IMR-90 (cell line): ENCODE measurements at regions of chr11 and their contacts with region 1.

Region 1: DNA sequence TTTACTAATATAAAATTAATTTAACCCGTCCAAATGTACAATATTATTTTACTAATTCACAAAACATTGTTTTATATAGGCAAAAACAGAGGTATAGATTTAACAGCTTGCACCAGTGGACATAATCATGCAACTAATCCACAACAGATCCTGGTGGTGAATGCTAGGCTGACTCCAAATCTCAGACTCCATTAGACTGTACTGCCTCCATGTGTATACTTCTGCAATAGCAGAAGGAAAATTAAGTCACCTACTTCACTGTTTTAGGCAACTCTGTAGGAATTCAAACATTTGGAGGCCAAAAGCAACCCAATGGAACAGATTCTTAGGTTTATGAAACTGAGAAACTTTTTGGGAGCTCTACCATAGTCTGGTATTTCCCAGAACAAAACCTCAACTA is 30.0 kb upstream of the RAB39A start:
- DNase-seq: peak; percentile 63
- ATAC-seq: peak; percentile 91
- H3K4me3 ChIP-seq: no peak overlapping the region
- H3K27ac ChIP-seq: no peak overlapping the region
- H3K4me1 ChIP-seq: no peaks in the 10 kb centered on the region
- H3K27me3 ChIP-seq: 0 out of 2 replicates have a peak, but pooled peaks cover 2% of the 10 kb centered on the region
- CTCF ChIP-seq: peak; percentile 71
- POLR2A ChIP-seq: no peak
- RAD21 ChIP-seq: peak; percentile 74

Region 2: GRCh38 chr11:107573438-107573837 is 324.8 kb before region 1 on chr11:
- CTCF ChIA-PET with region 1: no interaction called
- POLR2A ChIA-PET with region 1: no interaction called
- dilution Hi-C with region 1: no loop called
- in situ Hi-C with region 1: no loop called
- intact Hi-C with region 1: loop called (anchors 1 kb)
- DNase-seq: no peak
- ATAC-seq: no peak
- H3K4me3 ChIP-seq: no peak overlapping the region
- H3K27ac ChIP-seq: no peak overlapping the region
- H3K4me1 ChIP-seq: no peaks in the 10 kb centered on the region
- H3K27me3 ChIP-seq: peaks cover 4% of the 10 kb centered on the region
- CTCF ChIP-seq: no peak
- POLR2A ChIP-seq: no peak
- RAD21 ChIP-seq: no peak

Region 3: GRCh38 chr11:107719557-107720302 is 178.5 kb before region 1 on chr11:
- CTCF ChIA-PET with region 1: no interaction called
- POLR2A ChIA-PET with region 1: no interaction called
- dilution Hi-C with region 1: no loop called
- in situ Hi-C with region 1: no loop called
- intact Hi-C with region 1: no loop called
- DNase-seq: no peak
- ATAC-seq: peak; percentile 27; the same call in 1 of the 2 replicates
- H3K4me3 ChIP-seq: no peak overlapping the region
- H3K27ac ChIP-seq: no peak overlapping the region
- H3K4me1 ChIP-seq: no peaks in the 10 kb centered on the region
- H3K27me3 ChIP-seq: peaks cover 12% of the 10 kb centered on the region; the same call in 1 of the 2 replicates
- CTCF ChIP-seq: no peak
- POLR2A ChIP-seq: no peak
- RAD21 ChIP-seq: no peak

Region 4: DNA sequence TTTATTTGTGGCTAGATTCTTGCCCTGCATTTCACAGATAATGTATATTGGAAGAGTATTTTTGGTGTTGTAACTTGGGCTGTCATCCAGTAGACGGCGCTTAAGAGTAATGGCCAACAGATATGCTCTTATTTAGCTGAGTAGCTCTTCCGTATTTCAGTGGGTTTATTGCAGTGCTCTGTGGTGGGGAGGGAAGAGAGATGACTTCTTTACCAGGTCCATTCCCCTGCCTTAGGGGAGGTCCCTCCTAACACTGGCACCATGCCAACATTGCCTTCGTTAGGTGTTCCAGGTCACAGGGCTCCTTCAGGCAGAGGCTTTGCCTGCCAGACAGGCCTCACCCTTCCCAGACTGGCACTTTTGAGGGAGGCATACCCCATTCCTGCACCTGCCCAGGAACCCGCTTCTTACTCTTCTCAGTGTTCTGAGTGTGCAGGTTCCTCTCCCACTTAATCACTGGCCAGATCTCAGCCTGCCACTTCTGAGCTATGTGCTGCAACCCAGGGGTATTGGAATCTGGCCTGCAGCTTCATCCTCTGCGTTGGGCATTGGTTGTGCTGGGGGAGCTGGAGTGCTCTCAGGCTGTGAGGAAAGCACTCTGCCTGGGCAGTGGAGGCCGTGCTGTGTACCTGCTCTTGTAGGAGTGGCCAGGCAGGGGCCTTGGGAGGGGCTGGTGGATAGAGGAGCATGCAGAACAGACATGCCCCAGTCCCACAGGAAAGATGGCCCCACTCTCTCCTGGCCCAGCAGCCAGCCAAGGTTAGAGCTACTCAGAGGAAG is 157.0 kb before region 1 on chr11:
- CTCF ChIA-PET with region 1: no interaction called
- POLR2A ChIA-PET with region 1: no interaction called
- dilution Hi-C with region 1: no loop called
- in situ Hi-C with region 1: no loop called
- intact Hi-C with region 1: loop called (anchors 1 kb)
- DNase-seq: peak; percentile 44
- ATAC-seq: peak; percentile 64
- H3K4me3 ChIP-seq: no peak overlapping the region
- H3K27ac ChIP-seq: no peak overlapping the region
- H3K4me1 ChIP-seq: no peaks in the 10 kb centered on the region
- H3K27me3 ChIP-seq: peaks cover 5% of the 10 kb centered on the region
- CTCF ChIP-seq: peak; percentile 59
- POLR2A ChIP-seq: no peak
- RAD21 ChIP-seq: peak; percentile 54

Region 5: GRCh38 chr11:107780775-107781174 is 117.5 kb before region 1 on chr11:
- CTCF ChIA-PET with region 1: no interaction called
- POLR2A ChIA-PET with region 1: no interaction called
- dilution Hi-C with region 1: no loop called
- in situ Hi-C with region 1: no loop called
- intact Hi-C with region 1: no loop called
- DNase-seq: no peak
- ATAC-seq: no peak
- H3K4me3 ChIP-seq: no peak overlapping the region
- H3K27ac ChIP-seq: no peak overlapping the region
- H3K4me1 ChIP-seq: no peaks in the 10 kb centered on the region
- H3K27me3 ChIP-seq: peaks cover 2% of the 10 kb centered on the region; the same call in 1 of the 2 replicates
- CTCF ChIP-seq: 0 out of 2 replicates have a peak, but pooled peaks have one; percentile 4
- POLR2A ChIP-seq: no peak
- RAD21 ChIP-seq: no peak

Region 6: DNA sequence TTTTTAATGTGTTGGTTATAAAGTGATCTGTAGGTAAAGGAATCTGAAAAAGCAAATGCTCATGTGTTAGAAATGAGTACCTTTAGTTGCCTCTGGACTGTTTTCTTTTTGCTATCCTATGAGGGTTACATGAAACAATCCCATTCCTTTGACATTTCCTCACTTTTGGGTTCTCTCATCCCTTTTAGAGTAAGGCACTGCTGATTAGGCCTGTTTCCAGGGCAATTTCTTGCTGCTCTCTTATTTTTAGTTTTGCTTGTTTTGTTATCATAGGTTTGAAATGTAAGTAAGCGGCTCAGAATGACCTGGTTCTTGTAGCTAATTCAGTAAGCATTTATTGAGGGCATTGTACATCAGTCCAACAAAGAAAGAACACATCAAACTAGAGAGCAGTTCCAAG is 905.5 kb after region 1 on chr11:
- CTCF ChIA-PET with region 1: no interaction called
- POLR2A ChIA-PET with region 1: no interaction called
- dilution Hi-C with region 1: no loop called
- in situ Hi-C with region 1: no loop called
- intact Hi-C with region 1: no loop called
- DNase-seq: peak; percentile 71
- ATAC-seq: peak; percentile 53
- H3K4me3 ChIP-seq: no peak overlapping the region
- H3K27ac ChIP-seq: peak overlapping the region; percentile 20; the same call in 1 of the 2 replicates
- H3K4me1 ChIP-seq: peaks cover 9% of the 10 kb centered on the region
- H3K27me3 ChIP-seq: no peaks in the 10 kb centered on the region
- CTCF ChIP-seq: no peak
- POLR2A ChIP-seq: no peak
- RAD21 ChIP-seq: no peak